Heart right ventricle (tissue), 16 donors: ENCODE measurements at regions of chr10 and their contacts with region 1.

Region 1: GRCh38 chr10:110225756-110226542 is 18.5 kb downstream of the MXI1 start:
- DNase-seq: peak; percentile 92 to 93
- ATAC-seq: peak; percentile 67 to 85 (median 72)
- H3K4me3 ChIP-seq: peak overlapping the region; percentile 64 to 99 (median 81)
- H3K27ac ChIP-seq: peak overlapping the region; percentile 85 to 93 (median 88)
- H3K4me1 ChIP-seq: peaks cover 7 to 60% (median 45%) of the 10 kb centered on the region in 9 donors
- H3K27me3 ChIP-seq: no peaks in the 10 kb centered on the region
- CTCF ChIP-seq: peak; percentile 54 to 85 (median 71)

Region 2: GRCh38 chr10:110129490-110129889 is 96.5 kb before region 1 on chr10:
- intact Hi-C with region 1: no loop called
- DNase-seq: no peak
- ATAC-seq: no peak
- H3K4me3 ChIP-seq: no peak overlapping the region
- H3K27ac ChIP-seq: no peak overlapping the region
- H3K4me1 ChIP-seq: peaks cover 0 to 3% (median 0%) of the 10 kb centered on the region in 9 donors
- H3K27me3 ChIP-seq: no peaks in the 10 kb centered on the region
- CTCF ChIP-seq: no peak

Region 3: GRCh38 chr10:110210674-110211464 is 15.1 kb before region 1 on chr10:
- intact Hi-C with region 1: loop called in 3 of 10 experiments (anchors 1 to 2 kb)
- DNase-seq: peak; percentile 97
- ATAC-seq: peak; percentile 89 to 94 (median 91)
- H3K4me3 ChIP-seq: peak overlapping the region; percentile 61 to 92 (median 82)
- H3K27ac ChIP-seq: peak overlapping the region; percentile 94 to 100 (median 98)
- H3K4me1 ChIP-seq: peaks cover 12 to 57% (median 52%) of the 10 kb centered on the region in 9 donors
- H3K27me3 ChIP-seq: no peaks in the 10 kb centered on the region
- CTCF ChIP-seq: no peak

Region 4: DNA sequence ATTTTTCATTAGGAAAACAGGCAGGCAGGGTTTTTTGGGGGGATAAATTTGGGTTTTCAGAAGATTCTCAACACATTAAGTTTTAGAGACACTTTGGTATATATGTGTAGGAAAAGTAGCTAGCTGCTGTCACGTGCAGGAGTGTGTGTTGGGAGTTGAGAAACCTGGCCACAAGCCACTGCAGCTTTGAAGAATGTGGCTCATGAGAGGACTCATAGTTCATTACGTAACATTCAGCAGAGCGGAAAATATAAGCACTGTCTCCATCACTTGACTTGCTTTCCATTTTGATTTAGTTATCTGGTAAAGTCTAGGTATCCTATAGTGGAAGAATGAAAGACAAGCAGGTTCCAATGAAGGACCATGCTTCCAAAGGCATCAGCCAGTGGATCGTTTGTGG is 47.5 kb after region 1 on chr10:
- intact Hi-C with region 1: loop called in 9 of 10 experiments (anchors 1 to 5 kb)
- DNase-seq: peak; percentile 42 to 48
- ATAC-seq: peak in 4 of 8 donors; percentile 31 to 63 (median 35)
- H3K4me3 ChIP-seq: peak overlapping the region in 1 of 10 donors; percentile 0
- H3K27ac ChIP-seq: peak overlapping the region; percentile 20 to 88 (median 60)
- H3K4me1 ChIP-seq: peaks cover 15 to 97% (median 65%) of the 10 kb centered on the region in 9 donors
- H3K27me3 ChIP-seq: no peaks in the 10 kb centered on the region
- CTCF ChIP-seq: no peak

Region 5: DNA sequence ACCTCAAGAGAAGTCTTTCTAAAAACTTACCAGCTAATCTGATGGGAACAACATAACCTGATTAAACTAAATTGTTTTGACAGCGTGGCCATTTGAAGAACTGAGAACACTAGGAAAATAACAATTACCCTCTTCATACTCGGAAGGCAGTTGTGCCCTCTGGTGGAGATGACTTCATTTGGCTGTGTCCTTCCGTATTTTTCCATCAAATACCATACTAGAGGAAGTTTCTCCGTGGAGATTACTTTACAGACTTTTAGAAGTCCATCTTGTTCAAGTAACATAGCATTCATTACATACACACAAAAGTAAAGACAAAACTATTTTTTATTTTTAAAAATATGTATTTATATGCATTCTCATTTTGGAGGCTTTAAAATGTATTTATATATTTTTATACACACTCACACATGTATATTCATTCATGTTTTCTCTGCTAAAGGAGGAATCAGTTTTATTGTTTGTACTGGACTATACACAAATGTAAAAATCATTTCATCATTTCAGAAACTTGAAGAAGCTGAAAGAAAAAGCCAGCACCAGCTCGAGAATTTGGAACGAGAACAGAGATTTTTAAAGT is 53.5 kb after region 1 on chr10:
- intact Hi-C with region 1: loop called in 8 of 10 experiments (anchors 5 kb)
- DNase-seq: peak in 1 of 2 donors; percentile 71
- ATAC-seq: peak; percentile 46 to 84 (median 76)
- H3K4me3 ChIP-seq: peak overlapping the region in 1 of 10 donors; percentile 26
- H3K27ac ChIP-seq: peak overlapping the region in 6 of 10 donors; percentile 5 to 57 (median 41)
- H3K4me1 ChIP-seq: peaks cover 2 to 55% (median 30%) of the 10 kb centered on the region in 9 donors
- H3K27me3 ChIP-seq: no peaks in the 10 kb centered on the region
- CTCF ChIP-seq: peak; percentile 69 to 89 (median 78)

Region 6: GRCh38 chr10:110326351-110327032 is 100.5 kb after region 1 on chr10:
- intact Hi-C with region 1: no loop called
- DNase-seq: no peak
- ATAC-seq: no peak
- H3K4me3 ChIP-seq: no peak overlapping the region
- H3K27ac ChIP-seq: no peak overlapping the region
- H3K4me1 ChIP-seq: peaks cover 0 to 3% (median 0%) of the 10 kb centered on the region in 9 donors
- H3K27me3 ChIP-seq: peaks cover 0 to 4% (median 0%) of the 10 kb centered on the region in 7 donors
- CTCF ChIP-seq: no peak